ENCODE measurements at regions of chr16 and their contacts with region 1.

Region 1: DNA sequence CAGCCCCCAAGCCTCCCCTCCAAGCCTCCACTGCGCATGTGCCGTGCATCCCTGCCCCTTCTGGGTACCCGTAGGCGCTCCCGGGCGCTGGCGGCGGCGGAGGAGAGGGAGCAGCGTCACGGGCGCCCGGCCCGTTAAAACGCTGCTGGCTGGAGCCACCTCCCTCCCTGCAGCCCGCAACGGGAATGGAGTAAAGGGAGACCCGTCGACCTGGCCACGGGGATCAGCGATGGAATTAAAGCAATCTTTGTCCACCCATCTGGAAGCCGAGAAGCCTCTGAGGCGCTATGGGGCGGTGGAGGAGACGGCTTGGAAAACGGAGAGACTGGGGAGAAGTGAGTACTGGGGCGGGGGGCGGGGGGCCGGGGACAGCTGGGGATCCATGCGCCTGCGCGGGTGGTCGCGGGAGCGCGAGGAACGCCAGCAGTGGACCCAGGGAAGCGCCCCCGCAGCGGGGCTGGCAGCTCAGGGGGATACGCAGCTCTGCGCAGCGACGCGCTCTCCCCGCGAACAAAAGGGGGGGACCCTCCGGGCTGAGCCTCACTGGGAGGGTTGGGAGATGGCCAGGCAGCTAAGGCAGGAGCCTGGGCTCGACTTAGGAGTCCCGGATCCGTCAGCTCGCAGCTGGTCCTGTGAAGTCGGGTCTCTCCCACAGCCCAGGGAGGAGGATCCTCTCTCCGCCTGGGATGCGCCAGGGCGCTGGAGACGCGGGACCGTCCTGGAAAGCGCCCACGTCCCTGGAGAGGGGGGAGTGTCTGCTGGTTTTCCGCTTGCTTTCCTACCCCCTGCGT is at the start of gene BMERB1:
- DNase-seq: peak; percentile 77 to 85 (median 82)
- ATAC-seq: peak; percentile 86 to 97 (median 96)
- H3K4me3 ChIP-seq: peak within 1 kb of the TSS; percentile 58 to 92 (median 78)
- H3K27ac ChIP-seq: peak within 1 kb of the TSS in 11 of 12 donors; percentile 22 to 86 (median 71)
- H3K4me1 ChIP-seq: peaks cover 0 to 22% (median 5%) of the 10 kb centered on the region in 12 donors
- H3K27me3 ChIP-seq: peaks cover 0 to 29% (median 0%) of the 10 kb centered on the region in 9 donors
- CTCF ChIP-seq: no peak
- POLR2A ChIP-seq: peak in 1 of 2 donors; percentile 44
- total RNA-seq, gene BMERB1: 48.4 to 105 (median 70.5) TPM

Region 2: GRCh38 chr16:15466886-15467781 is 32.5 kb after region 1 on chr16:
- intact Hi-C with region 1: no loop called
- DNase-seq: no peak
- ATAC-seq: no peak
- H3K4me3 ChIP-seq: no peak overlapping the region
- H3K27ac ChIP-seq: no peak overlapping the region
- H3K4me1 ChIP-seq: no peaks in the 10 kb centered on the region
- H3K27me3 ChIP-seq: no peaks in the 10 kb centered on the region
- CTCF ChIP-seq: peak in 1 of 12 donors; percentile 16
- POLR2A ChIP-seq: no peak

Region 3: DNA sequence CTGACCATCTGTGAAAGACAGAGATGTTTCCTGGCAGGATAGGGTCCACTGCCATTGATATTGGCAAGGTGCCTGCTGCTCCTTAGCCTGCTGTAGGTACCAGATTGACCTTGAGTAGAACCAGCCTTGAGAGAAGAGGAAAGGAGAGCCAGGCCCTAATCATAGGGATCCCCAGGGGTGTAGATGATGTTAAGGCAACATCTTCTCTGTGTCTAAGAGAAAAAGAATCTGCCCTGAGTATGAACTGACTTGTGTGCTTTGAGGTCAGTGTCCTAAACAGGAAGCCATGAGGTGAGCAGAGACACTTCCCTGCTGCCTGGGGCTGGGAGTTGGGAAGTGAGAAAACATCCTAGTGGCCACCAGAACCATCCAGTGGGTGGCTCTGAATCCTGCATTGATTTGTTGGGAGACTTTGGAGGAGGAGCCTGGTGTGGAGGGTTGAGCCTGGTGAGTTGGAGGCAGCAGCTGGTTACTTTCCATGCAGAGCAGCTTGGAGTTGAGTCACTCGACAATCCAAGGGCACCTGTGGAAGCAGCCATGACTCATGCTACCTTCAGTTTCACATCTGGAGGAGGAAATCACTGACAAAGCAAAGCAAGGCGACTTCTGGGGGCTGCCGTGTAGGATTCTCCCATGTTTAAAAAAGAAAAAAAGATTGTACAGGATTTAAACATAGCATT is 47.6 kb after region 1 on chr16:
- intact Hi-C with region 1: loop called in 1 of 10 experiments (anchors 10 kb)
- DNase-seq: peak in 4 of 5 donors; percentile 46 to 68 (median 48)
- ATAC-seq: peak; percentile 26 to 95 (median 90)
- H3K4me3 ChIP-seq: no peak overlapping the region
- H3K27ac ChIP-seq: peak overlapping the region in 3 of 12 donors; percentile 1 to 37 (median 13)
- H3K4me1 ChIP-seq: peaks cover 0 to 13% (median 1%) of the 10 kb centered on the region in 12 donors
- H3K27me3 ChIP-seq: no peaks in the 10 kb centered on the region
- CTCF ChIP-seq: no peak
- POLR2A ChIP-seq: no peak

Region 4: DNA sequence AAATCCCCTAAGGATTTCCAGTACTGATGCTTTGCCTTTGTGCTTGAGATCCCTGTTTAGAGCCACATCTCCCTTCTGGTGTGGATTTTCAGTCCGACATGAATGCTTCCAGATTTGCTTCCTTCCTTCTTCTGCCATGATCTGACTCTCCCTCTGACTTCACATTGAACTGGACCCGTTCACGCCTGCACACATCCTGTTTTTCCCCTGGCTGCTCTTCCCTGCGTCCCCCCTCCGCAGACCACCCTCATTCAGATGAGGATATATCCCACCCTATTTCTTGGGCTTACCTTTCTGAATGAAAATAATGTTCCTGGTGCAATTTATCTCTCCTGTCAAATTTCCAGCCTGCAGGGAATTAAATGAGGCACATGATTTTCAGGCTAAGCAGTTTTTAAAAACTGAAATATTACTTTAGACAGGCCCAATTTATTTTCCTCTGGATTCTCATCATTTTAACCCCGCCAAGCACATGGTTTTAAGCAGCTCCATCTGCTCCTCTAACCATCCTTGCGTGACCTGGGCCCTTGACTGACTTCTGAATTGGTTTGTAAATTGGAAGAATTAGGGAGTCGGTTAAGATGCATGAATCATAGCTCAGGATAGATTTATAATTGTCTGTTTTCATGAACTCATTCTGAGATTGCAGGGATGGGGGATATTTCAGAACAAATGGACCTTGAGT is 59.0 kb after region 1 on chr16:
- intact Hi-C with region 1: loop called in 2 of 10 experiments (anchors 1 to 10 kb)
- DNase-seq: no peak
- ATAC-seq: peak in 1 of 4 donors; percentile 19
- H3K4me3 ChIP-seq: no peak overlapping the region
- H3K27ac ChIP-seq: peak overlapping the region in 7 of 12 donors; percentile 6 to 73 (median 53)
- H3K4me1 ChIP-seq: peaks cover 0 to 39% (median 21%) of the 10 kb centered on the region in 12 donors
- H3K27me3 ChIP-seq: no peaks in the 10 kb centered on the region
- CTCF ChIP-seq: no peak
- POLR2A ChIP-seq: no peak

Region 5: DNA sequence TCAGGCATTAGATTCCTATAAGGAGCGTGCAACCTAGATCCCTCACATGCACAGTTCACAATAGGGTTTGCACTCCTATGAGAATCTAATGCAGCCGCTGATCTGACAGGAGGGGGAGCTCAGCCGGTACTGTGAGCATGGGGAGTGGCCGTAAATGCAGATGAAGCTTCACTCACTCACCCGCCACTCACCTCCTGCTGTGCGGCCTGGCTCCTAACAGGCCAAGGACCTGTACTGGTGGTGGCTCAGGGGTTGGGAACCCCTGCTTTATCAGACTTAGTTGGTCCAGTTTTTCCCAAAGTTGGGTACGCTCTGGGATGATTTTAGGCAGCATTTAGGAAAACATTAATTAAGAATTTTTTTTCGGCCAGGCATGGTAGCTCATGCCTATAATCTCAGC is 104.6 kb after region 1 on chr16:
- intact Hi-C with region 1: loop called in 4 of 10 experiments (anchors 5 to 10 kb)
- DNase-seq: no peak
- ATAC-seq: no peak
- H3K4me3 ChIP-seq: no peak overlapping the region
- H3K27ac ChIP-seq: no peak overlapping the region
- H3K4me1 ChIP-seq: no peaks in the 10 kb centered on the region
- H3K27me3 ChIP-seq: no peaks in the 10 kb centered on the region
- CTCF ChIP-seq: no peak
- POLR2A ChIP-seq: no peak

Region 6: DNA sequence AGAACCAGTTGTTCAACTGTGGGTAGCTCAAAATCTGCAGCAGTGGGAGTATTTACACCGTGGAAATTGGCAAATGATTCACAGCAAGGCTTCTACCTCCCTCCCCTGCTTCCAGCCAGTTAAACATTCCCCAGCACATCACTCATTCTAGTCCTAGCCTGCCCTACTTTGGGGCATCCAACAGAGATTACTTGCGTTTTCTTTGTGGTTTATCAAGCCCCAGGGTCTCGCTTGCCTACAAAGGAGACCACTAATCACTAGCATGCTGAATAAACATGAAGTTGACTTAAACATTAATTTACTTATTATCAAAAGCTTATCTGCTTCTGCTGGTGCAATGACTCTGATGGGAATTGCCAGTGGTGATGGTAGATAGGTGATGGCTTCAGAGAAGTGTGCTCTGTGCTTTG is 113.9 kb after region 1 on chr16:
- intact Hi-C with region 1: loop called in 9 of 10 experiments (anchors 5 to 10 kb)
- DNase-seq: no peak
- ATAC-seq: no peak
- H3K4me3 ChIP-seq: no peak overlapping the region
- H3K27ac ChIP-seq: no peak overlapping the region
- H3K4me1 ChIP-seq: peaks cover 0 to 12% (median 2%) of the 10 kb centered on the region in 12 donors
- H3K27me3 ChIP-seq: no peaks in the 10 kb centered on the region
- CTCF ChIP-seq: no peak
- POLR2A ChIP-seq: no peak

Region 7: GRCh38 chr16:15553313-15554088 is 118.9 kb after region 1 on chr16:
- intact Hi-C with region 1: loop called in 9 of 10 experiments (anchors 5 to 10 kb)
- DNase-seq: no peak
- ATAC-seq: no peak
- H3K4me3 ChIP-seq: no peak overlapping the region
- H3K27ac ChIP-seq: no peak overlapping the region
- H3K4me1 ChIP-seq: peaks cover 0 to 12% (median 2%) of the 10 kb centered on the region in 12 donors
- H3K27me3 ChIP-seq: no peaks in the 10 kb centered on the region
- CTCF ChIP-seq: no peak
- POLR2A ChIP-seq: no peak

Measured in heart left ventricle (tissue), 16 donors.